ENCODE measurements at regions of chr6 and their contacts with region 1.

Region 1: GRCh38 chr6:5143634-5144311 is 58.6 kb downstream of the PPP1R3G start:
- DNase-seq: peak; percentile 95

Region 2: DNA sequence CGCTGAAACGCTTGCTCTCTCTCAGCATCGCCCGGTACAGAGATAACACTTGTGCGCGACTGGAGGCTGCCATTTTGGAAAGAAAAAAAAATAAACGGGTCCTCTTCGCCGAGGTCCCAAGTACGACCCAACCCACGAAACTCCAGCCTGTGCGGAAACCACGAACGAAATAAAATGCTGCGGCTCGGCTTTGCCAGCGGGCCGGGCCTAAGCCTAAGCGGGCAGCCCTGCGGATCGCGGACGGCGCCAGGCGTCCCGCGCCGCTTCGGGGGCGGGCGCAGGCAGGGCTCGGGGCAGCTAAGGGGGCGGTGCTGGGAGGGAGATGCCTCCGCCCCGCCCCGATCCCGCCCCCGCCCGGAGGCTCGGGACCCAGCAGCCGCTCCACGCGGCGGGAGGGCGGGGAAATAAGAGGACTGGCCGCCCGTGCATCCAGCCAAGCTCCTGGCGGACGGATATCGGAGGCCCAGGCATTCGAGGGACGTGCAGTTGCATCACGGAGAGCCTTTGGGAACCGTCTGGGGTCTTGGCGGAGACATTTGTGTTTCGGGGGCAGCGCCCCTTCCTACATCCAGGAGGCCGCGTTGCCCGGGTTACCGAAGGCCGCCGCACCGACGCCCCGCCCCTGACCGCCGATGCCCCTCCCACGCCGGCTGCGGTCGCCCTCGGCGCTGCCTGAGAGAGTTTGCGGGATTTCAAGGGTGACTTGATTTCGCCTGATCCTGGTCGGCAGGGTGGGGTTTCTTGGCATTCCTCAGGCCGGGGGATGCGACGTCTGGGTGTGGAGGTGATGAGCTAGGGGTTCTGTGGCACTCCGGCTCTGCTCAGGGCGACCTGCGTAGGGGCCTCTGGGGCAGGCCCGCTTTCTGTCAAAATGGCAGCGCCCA is 117.1 kb after region 1 on chr6 and contains the starts of genes FARS2 and LYRM4:
- intact Hi-C with region 1: loop called in 1 of 2 experiments (anchors 10 kb)
- DNase-seq: peak; percentile 97
- total RNA-seq, gene FARS2: 13.3 to 13.6 TPM
- total RNA-seq, gene LYRM4: 16.3 to 23.9 TPM

Region 3: GRCh38 chr6:5379647-5380242 is 236.0 kb after region 1 on chr6:
- intact Hi-C with region 1: loop called in 1 of 2 experiments (anchors 10 kb)
- DNase-seq: no peak